GM10248 (cell line): ENCODE measurements at regions of chr14 and their contacts with region 1.

Region 1: GRCh38 chr14:22319526-22320361 is 269.3 kb downstream of the DAD1 start:
- DNase-seq: peak; percentile 52
- CTCF ChIP-seq: peak; percentile 79

Region 2: DNA sequence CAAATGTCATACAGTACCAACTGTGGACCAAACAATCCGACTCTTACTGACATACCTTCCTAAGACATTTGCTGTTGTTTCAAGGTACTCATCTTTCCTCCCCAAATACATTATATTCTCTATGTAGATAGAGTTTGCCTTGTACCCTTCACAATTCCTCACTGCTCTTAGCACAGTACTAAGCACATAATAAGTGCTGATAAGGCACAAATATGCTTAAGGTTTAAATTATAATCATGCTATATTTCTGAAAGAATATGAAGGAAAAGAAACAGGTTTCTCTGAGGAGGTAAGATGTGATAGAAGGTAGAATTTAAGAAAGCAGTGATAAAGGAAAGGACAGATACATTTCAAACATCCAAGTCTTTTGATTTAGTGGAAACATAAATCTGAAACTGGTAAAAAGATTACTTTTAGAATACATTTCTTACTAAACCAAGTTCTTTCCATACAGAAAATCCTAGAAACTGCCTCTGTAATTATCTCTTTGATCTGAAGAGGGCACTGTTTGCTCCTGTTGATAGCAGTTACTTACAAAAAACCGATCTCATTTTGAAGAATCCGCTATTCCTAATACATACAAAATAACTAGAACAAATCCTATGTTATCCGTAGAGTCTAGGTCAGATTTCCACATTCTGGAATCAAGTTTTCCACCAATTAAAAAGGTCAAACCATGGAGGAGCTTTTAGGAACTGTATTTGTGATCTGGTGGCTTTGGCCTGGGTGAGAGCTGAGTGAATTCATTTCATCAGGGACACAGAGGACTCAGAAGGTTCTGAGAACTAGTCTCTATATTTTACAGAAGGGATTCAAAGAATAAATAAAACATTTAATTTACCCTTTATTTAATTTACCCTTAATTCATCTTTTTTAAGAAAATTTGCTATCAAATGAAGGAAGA is 42.6 kb before region 1 on chr14:
- CTCF ChIA-PET with region 1: interaction called, 11 read pairs
- POLR2A ChIA-PET with region 1: no interaction called
- DNase-seq: no peak
- CTCF ChIP-seq: peak; percentile 60

Region 3: DNA sequence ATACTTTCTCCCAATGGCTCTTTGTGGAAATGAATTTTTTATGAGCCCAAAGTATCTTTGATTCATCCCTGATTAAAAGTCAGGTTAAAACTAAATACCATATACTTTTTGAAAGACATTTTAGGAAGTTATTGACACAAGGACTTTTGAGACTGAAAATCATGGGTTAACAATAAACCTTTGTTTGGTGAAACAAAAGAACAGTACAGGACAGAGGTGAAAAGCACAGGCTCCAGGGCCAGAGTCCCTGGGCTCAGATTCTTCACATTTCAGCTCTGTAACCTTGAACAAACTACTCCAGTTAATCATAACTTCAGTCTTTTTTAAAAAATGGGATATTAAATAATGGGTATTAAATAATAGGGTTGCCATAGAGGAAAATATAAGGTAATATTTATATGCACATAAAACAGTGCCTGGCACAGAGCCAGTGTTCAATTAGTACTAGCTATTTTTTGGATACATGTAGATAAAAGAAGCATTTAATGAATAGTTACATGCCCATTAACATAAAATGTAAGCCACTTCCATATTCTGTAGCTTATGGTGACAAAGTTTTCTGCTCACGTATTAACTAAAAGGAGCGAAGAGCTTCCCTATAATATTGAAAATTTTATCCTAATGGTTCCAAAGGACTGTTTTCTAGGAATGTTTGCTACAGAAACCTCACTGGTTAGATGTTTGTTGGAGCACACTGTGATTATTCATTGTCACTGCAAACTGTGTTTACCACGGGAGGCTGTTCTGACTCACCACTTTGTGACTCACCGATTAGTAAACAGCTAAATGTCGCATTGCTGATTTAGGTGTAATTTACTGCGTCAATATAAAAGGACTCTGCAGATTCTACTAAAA is 13.9 kb after region 1 on chr14:
- CTCF ChIA-PET with region 1: interaction called, 44 read pairs
- POLR2A ChIA-PET with region 1: no interaction called
- DNase-seq: no peak
- CTCF ChIP-seq: no peak

Region 4: GRCh38 chr14:22358726-22359125 is 39.0 kb after region 1 on chr14:
- CTCF ChIA-PET with region 1: interaction called, 23 read pairs
- POLR2A ChIA-PET with region 1: no interaction called
- DNase-seq: no peak
- CTCF ChIP-seq: no peak

Region 5: GRCh38 chr14:22380571-22381407 is 61.0 kb after region 1 on chr14:
- CTCF ChIA-PET with region 1: interaction called, 135 read pairs
- POLR2A ChIA-PET with region 1: no interaction called
- DNase-seq: no peak
- CTCF ChIP-seq: no peak

Region 6: GRCh38 chr14:22466491-22466890 is 146.7 kb after region 1 on chr14:
- CTCF ChIA-PET with region 1: interaction called, 53 read pairs
- POLR2A ChIA-PET with region 1: no interaction called
- DNase-seq: peak; percentile 45
- CTCF ChIP-seq: no peak